Dorsolateral prefrontal cortex (tissue), 120 donors: ENCODE measurements at regions of chr1 and their contacts with region 1.

Region 1: GRCh38 chr1:248858891-248859889 is at the start of gene ZNF692:
- DNase-seq: peak; percentile 91 to 99 (median 96)
- H3K4me3 ChIP-seq: peak within 1 kb of the TSS; percentile 55 to 92 (median 72)
- H3K27ac ChIP-seq: peak within 1 kb of the TSS; percentile 77 to 99 (median 93)
- H3K27me3 ChIP-seq: no peaks in the 10 kb centered on the region
- CTCF ChIP-seq: peak in 32 of 56 donors; percentile 6 to 59 (median 30)
- total RNA-seq, gene ZNF692: 27.9 to 117 (median 68.8) TPM

Region 2: DNA sequence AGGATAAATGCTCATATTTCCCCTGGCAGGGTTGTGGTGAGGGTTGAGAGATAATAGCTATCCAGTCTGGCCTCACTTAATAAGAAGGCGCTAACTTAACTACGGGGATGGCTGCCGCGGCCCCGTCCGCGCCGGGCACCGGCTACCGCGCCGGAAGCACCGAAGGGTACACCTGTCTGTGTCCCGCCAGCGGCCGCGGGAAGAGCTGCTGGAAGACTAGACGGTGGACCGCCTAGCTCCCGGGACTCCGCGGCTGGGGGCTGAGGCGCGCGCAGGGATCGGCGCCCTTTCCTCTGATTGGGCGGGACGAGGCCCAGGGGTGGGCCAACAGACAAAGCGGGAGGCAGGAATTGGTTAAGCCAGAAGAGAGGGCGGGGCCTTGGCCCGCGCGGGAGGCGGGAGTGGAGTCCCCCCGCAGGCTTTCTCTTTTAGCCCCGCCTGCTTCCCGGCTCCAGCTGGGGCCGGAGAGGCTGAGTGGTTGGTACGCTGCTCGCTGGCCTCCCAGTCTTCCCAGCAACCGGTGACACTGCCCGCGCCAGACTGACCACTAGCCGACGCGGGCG is 21.3 kb before region 1 on chr1 and contains the start of gene ZNF672:
- intact Hi-C with region 1: loop called (anchors 1 kb)
- DNase-seq: peak; percentile 93 to 99 (median 98)
- H3K4me3 ChIP-seq: peak within 1 kb of the TSS; percentile 59 to 99 (median 92)
- H3K27ac ChIP-seq: peak within 1 kb of the TSS; percentile 81 to 100 (median 99)
- H3K27me3 ChIP-seq: no peaks in the 10 kb centered on the region
- CTCF ChIP-seq: peak in 22 of 56 donors; percentile 4 to 55 (median 15)
- total RNA-seq, gene ZNF672: 15.9 to 43.0 (median 23.4) TPM

Region 3: DNA sequence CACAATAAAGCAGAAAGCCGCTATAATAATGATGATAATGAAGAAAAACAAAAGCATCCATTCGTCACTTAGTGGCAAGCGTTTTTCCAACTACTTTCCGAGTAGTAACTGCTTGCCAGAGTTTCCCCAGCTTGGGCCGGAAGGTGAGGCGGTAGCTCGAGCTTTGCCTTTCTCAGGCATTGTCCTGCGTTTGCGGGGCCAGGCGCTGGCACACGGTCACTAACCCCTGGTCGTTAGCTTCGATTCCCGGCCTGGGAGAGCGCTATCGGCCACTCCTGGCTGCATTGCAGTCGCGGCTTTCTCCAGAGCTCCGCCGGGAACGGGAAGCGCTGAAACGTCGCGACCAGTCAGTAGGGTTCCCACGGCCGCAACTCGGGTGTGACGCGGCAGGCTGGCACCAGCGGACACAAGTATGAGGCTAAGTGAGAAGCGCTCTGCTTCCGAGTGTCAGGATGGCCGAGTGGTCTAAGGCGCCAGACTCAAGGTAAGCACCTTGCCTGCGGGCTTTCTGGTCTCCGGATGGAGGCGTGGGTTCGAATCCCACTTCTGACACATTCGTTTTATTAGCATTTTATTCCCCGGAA is 14.3 kb after region 1 on chr1:
- intact Hi-C with region 1: loop called (anchors 1 to 2 kb)
- DNase-seq: peak; percentile 91 to 98 (median 97)
- H3K4me3 ChIP-seq: peak overlapping the region; percentile 48 to 95 (median 79)
- H3K27ac ChIP-seq: peak overlapping the region; percentile 82 to 99 (median 95)
- H3K27me3 ChIP-seq: no peaks in the 10 kb centered on the region
- CTCF ChIP-seq: peak in 15 of 56 donors; percentile 2 to 25 (median 11)

Region 4: DNA sequence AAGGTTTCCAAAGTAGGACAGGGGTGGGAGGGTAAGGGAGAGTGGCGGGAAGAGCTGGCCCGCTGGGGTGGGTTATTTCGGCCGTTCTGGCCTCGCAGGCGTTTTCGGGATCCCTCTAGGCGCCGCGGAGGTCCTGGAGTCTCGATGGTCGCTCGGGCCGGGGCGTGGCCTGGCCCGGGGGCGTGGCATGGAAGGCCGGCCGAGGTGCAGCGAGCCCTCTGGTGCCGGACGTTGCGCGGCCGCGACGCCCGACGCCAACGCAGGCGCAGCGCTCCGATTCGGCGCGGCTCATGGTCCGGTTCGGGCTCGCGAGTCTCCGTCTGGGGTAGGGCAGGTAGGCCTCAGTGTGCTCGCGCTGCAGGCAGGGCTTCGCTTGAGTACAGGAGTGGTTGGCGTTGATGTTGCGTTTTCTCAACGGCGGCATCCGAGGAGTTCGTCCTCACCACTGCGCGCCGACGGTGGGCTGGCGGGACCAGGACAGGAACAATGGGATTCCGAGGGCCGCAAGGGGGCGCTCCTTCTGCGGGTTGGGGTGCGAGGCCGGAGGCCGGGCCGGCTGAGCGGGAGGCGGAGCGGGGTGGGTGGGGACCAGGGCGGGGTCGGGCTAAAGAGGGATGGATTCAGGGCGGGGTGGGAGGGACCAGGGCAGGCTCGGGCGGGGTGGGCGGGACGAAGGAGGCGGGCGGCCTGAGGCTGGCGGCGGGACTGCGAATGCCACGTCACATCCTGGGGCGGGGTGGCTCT is 47.0 kb after region 1 on chr1 and contains the start of gene PGBD2:
- intact Hi-C with region 1: loop called in 1 of 2 experiments (anchors 1 kb)
- DNase-seq: peak; percentile 84 to 94 (median 90)
- H3K4me3 ChIP-seq: peak within 1 kb of the TSS; percentile 52 to 93 (median 77)
- H3K27ac ChIP-seq: peak within 1 kb of the TSS; percentile 73 to 98 (median 93)
- H3K27me3 ChIP-seq: no peaks in the 10 kb centered on the region
- CTCF ChIP-seq: peak in 55 of 56 donors; percentile 23 to 82 (median 65)
- total RNA-seq, gene PGBD2: 3.2 to 11.1 (median 6.2) TPM